ENCODE measurements at regions of chr1 and their contacts with region 1.

Region 1: DNA sequence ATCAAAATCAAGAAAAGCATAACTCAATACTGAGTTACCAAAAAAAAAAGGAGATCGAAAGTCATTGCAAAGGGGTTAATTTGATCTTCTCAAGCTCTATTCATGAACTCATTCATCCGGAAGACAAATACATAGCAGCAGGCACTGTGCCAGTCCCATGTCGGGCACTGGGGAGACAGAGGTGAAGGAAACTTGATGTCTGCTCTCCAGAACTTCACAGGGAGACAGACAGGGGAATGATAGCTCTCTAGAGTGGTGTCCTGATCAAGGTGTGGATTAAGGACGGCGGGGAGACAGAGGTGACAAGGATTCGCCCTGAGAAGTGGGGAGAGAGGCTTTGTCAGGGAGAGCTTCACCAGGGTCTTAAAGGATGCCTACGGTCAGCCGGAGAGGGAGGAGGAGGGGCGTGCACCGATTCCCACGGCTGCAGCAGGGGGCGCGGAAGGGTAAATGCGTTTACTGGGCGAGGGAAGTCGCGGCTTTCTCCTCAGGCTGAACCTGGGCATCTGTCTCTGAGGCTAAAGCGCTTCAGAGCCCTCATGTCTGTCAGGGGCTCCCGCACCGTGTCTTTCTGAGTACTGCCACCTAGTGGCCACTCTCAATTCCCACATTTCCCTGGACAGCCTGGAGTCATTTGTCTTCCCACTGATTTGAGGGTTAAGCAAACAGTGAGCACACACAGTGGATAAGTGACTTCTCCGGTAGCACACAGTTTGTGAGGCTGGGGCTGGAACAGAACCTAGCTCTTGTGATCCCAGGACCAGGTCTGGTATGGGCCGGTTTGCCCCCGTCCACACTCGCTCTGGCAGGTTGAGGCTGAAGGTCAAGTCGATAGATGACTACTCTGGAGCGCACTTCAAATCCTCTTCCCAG is 152.8 kb downstream of the TENT5C start:
- DNase-seq: peak; percentile 38 to 80 (median 70)
- H3K4me3 ChIP-seq: peak overlapping the region; percentile 38 to 80 (median 60)
- H3K27ac ChIP-seq: peak overlapping the region in 3 of 59 donors; percentile 14 to 71 (median 58)
- H3K27me3 ChIP-seq: peaks cover 0 to 11% (median 0%) of the 10 kb centered on the region in 45 donors
- CTCF ChIP-seq: peak; percentile 72 to 94 (median 89)

Region 2: DNA sequence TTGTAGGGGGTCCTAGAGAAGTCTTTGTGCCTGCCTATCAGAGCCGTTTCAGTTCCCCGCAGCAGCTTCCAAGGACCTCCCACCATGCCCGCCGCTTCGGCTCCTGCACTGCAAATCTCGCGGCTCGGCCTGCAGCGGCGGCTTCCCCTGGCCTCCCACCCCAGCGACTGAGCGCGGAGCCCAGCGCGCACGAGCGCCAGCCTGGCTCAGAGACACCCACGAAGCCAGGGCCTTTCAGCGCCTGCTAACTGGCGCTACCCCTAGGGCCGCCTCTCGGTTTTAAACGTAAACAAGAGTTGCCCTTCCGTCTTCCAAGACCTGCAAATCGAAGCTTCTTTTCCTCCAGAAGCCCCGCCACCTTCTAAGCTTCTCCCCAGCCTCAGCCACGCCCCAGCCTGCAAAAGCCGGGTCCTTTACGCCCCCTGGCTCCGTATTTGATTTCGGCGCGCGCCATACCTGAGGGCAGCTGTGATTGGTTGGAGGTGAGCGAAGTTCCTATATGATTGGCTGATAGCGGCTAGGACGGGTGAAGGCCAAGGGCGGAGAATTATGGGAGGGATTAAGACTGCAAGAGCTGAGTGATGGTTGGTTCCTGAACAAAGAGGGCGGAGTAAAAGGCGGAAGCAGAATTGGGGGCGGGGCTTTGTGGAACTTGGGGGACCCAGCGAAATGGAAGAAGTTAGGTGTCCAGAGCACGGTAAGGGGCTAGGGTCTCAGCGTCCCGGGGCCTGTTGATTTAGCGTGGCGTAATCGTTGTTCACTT is 698.8 kb before region 1 on chr1 and contains the start of gene TTF2:
- intact Hi-C with region 1: loop called in 1 of 2 experiments (anchors 10 kb)
- DNase-seq: peak; percentile 68 to 94 (median 92)
- H3K4me3 ChIP-seq: peak within 1 kb of the TSS; percentile 65 to 97 (median 84)
- H3K27ac ChIP-seq: peak within 1 kb of the TSS in 15 of 59 donors; percentile 3 to 73 (median 48)
- H3K27me3 ChIP-seq: no peaks in the 10 kb centered on the region
- CTCF ChIP-seq: peak in 47 of 56 donors; percentile 4 to 66 (median 44)
- total RNA-seq, gene TTF2: 6.5 to 31.5 (median 14.0) TPM

Region 3: GRCh38 chr1:117367047-117368018 is 391.3 kb before region 1 on chr1 and contains the start of gene MAN1A2:
- intact Hi-C with region 1: loop called in 1 of 2 experiments (anchors 5 kb)
- DNase-seq: peak; percentile 68 to 87 (median 79)
- H3K4me3 ChIP-seq: peak within 1 kb of the TSS; percentile 52 to 96 (median 86)
- H3K27ac ChIP-seq: peak within 1 kb of the TSS; percentile 88 to 100 (median 97)
- H3K27me3 ChIP-seq: no peaks in the 10 kb centered on the region
- CTCF ChIP-seq: peak in 15 of 56 donors; percentile 1 to 35 (median 17)
- total RNA-seq, gene MAN1A2: 62.9 to 127 (median 92.7) TPM

Region 4: GRCh38 chr1:117534995-117535467 is 223.6 kb before region 1 on chr1:
- intact Hi-C with region 1: loop called in 1 of 2 experiments (anchors 10 kb)
- DNase-seq: peak in 1 of 10 donors; percentile 21
- H3K4me3 ChIP-seq: no peak overlapping the region
- H3K27ac ChIP-seq: no peak overlapping the region
- H3K27me3 ChIP-seq: no peaks in the 10 kb centered on the region
- CTCF ChIP-seq: peak; percentile 44 to 78 (median 64)

Region 5: DNA sequence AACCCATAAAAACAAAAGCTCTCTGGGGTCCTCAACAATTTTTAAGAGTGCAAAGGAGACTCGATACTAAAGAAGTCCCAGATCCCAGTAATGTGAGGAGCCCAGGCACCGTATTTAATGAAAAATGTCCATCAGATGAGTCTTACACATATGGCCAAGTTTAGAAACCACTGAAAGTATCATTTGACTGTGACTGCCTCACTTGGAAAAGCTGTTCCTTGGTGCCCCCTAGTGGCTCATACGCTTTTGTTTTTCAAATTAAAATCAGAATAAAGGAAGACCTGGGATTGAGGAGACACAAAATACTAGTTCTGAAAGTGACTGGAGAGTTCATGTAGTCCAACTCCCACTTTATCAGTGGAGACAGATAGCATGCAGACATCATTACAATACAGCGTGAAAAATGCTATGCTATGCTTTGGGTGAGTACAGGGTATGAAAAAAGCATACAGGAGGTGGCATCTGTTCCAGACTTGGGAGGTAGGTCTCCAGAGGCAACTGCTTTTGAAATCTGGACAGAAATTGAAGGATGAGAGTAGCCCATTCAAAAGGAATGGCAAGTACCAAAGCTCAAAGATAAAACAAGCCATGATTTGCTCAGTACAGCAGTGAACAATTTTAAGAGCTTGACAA is 136.9 kb after region 1 on chr1:
- intact Hi-C with region 1: loop called in 1 of 2 experiments (anchors 10 kb)
- DNase-seq: peak in 7 of 10 donors; percentile 32 to 79 (median 43)
- H3K4me3 ChIP-seq: no peak overlapping the region
- H3K27ac ChIP-seq: no peak overlapping the region
- H3K27me3 ChIP-seq: no peaks in the 10 kb centered on the region
- CTCF ChIP-seq: peak; percentile 59 to 88 (median 76)